PC-9 (cell line): ENCODE measurements at regions of chr5 and their contacts with region 1.

Region 1: DNA sequence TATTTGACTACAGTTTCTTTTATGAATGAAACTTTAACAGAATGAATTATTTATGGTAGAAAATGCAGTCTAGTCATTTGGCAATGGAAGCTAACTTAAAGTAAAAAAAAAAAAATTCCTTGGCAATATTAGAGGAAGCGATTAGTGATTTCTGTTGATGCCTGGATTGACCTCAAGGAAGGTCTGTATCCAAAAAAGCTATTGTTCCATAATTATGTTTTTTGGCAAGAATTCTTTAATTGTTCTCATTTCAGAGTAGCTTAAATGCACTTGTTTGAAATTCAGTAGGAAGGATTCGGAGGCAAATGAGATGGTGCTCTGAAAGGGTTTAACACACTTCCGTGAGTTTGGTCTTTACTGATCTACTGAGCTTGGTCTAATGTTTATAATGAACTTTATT is 61.8 kb downstream of the ITGA1 start:
- DNase-seq: no peak
- H3K4me3 ChIP-seq: no peak overlapping the region
- H3K27ac ChIP-seq: no peak overlapping the region
- H3K4me1 ChIP-seq: no peaks in the 10 kb centered on the region
- H3K27me3 ChIP-seq: no peaks in the 10 kb centered on the region
- CTCF ChIP-seq: no peak

Region 2: DNA sequence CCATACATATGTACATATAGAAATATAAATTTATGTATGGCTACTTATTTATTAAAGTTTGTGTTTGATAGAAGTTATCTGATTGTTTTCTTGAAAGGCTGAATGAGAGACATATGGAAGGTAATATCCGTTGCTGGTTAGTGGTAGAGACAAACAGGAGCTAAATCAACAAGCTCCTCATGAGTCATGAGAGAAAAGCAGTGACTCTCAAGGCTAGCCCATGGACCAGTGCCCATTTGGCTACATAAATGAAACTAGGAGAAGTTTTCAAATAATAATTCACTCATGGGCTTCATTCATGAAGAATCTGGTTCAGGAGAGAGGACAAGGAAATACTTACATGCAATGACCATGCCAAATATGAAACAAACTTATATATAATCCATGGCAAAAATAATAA is 566.3 kb before region 1 on chr5:
- CTCF ChIA-PET with region 1: no interaction called
- POLR2A ChIA-PET with region 1: no interaction called
- intact Hi-C with region 1: no loop called
- DNase-seq: no peak
- H3K4me3 ChIP-seq: no peak overlapping the region
- H3K27ac ChIP-seq: no peak overlapping the region
- H3K4me1 ChIP-seq: no peaks in the 10 kb centered on the region
- H3K27me3 ChIP-seq: no peaks in the 10 kb centered on the region
- CTCF ChIP-seq: no peak

Region 3: GRCh38 chr5:52903142-52903541 is 53.6 kb after region 1 on chr5:
- CTCF ChIA-PET with region 1: no interaction called
- POLR2A ChIA-PET with region 1: interaction called, 10 read pairs
- intact Hi-C with region 1: no loop called
- DNase-seq: no peak
- H3K4me3 ChIP-seq: no peak overlapping the region
- H3K27ac ChIP-seq: no peak overlapping the region
- H3K4me1 ChIP-seq: no peaks in the 10 kb centered on the region
- H3K27me3 ChIP-seq: no peaks in the 10 kb centered on the region
- CTCF ChIP-seq: no peak